ENCODE measurements at regions of chr12 and their contacts with region 1.

Region 1: GRCh38 chr12:75862692-75863471 is 168.7 kb downstream of the PHLDA1 start:
- DNase-seq: peak; percentile 94
- H3K4me3 ChIP-seq: no peak overlapping the region
- H3K27ac ChIP-seq: peak overlapping the region; percentile 99
- H3K4me1 ChIP-seq: peaks cover 46% of the 10 kb centered on the region
- H3K27me3 ChIP-seq: no peaks in the 10 kb centered on the region
- CTCF ChIP-seq: no peak

Region 2: DNA sequence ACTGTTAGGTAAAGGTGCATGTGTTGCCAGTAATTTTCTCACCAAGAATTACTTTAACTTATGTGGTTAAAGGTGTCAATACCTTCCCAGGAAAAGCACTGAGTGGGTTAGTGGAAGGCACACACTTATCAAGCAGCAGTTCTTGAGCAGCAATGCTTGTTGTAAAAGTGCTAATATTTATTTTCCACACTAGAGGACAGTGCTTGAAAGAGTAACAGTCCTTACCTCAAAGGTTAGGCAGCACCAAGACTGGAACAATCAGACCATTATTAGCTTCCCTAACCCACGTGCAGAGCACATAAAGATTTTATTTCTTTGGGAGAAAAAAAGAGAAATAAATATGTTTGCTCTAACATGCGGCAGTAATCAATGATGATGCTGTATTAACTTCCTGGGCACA is 302.7 kb before region 1 on chr12:
- CTCF ChIA-PET with region 1: no interaction called
- dilution Hi-C with region 1: no loop called
- in situ Hi-C with region 1: no loop called
- intact Hi-C with region 1: loop called (anchors 5 kb)
- DNase-seq: peak; percentile 56
- H3K4me3 ChIP-seq: no peak overlapping the region
- H3K27ac ChIP-seq: no peak overlapping the region
- H3K4me1 ChIP-seq: peaks cover 18% of the 10 kb centered on the region
- H3K27me3 ChIP-seq: no peaks in the 10 kb centered on the region
- CTCF ChIP-seq: peak; percentile 48 to 68

Region 3: DNA sequence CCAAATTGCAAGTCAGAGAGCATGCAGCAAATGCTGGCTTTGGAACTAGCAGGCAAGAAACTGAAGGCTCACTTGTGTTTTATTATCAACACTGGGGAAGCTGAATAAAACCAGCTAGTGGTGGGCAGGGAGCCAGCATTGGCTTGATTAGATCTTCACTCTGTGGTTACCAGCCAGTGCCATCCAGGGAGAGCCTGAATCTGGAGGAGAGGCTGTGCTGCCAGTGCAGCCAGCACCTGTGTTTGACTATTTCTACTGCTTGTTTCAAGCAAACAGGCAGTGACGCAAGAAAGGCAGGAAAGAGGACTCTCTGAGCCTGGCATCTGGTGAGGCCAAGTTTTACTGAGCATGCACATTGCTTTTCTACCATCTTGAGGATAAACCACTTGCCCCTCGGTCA is 78.3 kb before region 1 on chr12:
- CTCF ChIA-PET with region 1: no interaction called
- dilution Hi-C with region 1: no loop called
- in situ Hi-C with region 1: no loop called
- intact Hi-C with region 1: loop called (anchors 2 kb)
- DNase-seq: peak; percentile 91
- H3K4me3 ChIP-seq: no peak overlapping the region
- H3K27ac ChIP-seq: peak overlapping the region; percentile 2
- H3K4me1 ChIP-seq: peaks cover 56% of the 10 kb centered on the region
- H3K27me3 ChIP-seq: no peaks in the 10 kb centered on the region
- CTCF ChIP-seq: no peak

Region 4: DNA sequence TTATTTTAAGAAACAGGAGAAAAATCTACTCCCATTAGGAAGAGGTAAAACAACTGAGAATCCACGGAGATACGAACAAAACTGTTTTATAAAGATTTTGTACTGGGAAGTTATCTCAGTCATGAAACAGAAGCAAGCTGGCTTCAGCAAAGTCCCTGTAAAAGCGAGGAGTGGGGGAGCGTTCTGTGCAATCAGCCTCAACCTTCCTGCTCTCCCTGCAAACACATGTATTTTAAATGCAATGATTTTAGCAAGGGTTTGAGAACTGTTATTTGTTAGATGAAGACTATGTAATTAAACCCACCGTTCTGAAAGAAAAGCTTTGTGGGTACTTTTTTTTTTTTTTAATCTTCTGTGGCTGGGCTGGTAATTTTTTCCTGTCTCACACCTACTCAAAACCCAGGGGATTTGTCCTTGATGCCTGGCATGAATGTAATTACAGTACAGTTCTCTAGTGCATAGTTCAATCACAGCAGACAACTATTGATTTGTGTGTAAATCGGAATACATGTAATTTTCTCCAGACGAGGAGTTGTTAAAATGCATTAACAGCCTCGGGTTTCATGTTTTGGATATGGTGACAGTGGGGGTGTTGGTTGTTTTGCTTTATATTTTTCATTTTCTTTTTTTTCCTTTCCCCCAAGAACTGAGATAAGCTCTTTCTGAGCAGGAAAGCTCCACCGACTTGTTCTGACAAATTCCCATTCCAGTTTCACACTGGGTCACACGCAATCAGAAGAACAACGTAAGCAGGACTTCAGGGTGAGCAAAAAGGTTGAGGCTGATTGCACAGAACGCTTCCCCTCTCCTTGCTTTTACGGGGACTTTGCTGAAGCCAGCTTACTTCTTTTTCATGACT is 15.1 kb after region 1 on chr12:
- CTCF ChIA-PET with region 1: no interaction called
- dilution Hi-C with region 1: no loop called
- in situ Hi-C with region 1: no loop called
- intact Hi-C with region 1: loop called (anchors 1 kb)
- DNase-seq: peak; percentile 74
- H3K4me3 ChIP-seq: no peak overlapping the region
- H3K27ac ChIP-seq: peak overlapping the region; percentile 93
- H3K4me1 ChIP-seq: peaks cover 28% of the 10 kb centered on the region
- H3K27me3 ChIP-seq: no peaks in the 10 kb centered on the region
- CTCF ChIP-seq: no peak

Region 5: GRCh38 chr12:75977952-75978671 is 115.2 kb after region 1 on chr12:
- CTCF ChIA-PET with region 1: no interaction called
- dilution Hi-C with region 1: no loop called
- in situ Hi-C with region 1: no loop called
- intact Hi-C with region 1: loop called (anchors 1 kb)
- DNase-seq: peak; percentile 99
- H3K4me3 ChIP-seq: no peak overlapping the region
- H3K27ac ChIP-seq: peak overlapping the region; percentile 96
- H3K4me1 ChIP-seq: peaks cover 37% of the 10 kb centered on the region
- H3K27me3 ChIP-seq: no peaks in the 10 kb centered on the region
- CTCF ChIP-seq: no peak

Measured in mammary epithelial cell (primary cell).